ENCODE measurements at regions of chr6 and their contacts with region 1.

Region 1: DNA sequence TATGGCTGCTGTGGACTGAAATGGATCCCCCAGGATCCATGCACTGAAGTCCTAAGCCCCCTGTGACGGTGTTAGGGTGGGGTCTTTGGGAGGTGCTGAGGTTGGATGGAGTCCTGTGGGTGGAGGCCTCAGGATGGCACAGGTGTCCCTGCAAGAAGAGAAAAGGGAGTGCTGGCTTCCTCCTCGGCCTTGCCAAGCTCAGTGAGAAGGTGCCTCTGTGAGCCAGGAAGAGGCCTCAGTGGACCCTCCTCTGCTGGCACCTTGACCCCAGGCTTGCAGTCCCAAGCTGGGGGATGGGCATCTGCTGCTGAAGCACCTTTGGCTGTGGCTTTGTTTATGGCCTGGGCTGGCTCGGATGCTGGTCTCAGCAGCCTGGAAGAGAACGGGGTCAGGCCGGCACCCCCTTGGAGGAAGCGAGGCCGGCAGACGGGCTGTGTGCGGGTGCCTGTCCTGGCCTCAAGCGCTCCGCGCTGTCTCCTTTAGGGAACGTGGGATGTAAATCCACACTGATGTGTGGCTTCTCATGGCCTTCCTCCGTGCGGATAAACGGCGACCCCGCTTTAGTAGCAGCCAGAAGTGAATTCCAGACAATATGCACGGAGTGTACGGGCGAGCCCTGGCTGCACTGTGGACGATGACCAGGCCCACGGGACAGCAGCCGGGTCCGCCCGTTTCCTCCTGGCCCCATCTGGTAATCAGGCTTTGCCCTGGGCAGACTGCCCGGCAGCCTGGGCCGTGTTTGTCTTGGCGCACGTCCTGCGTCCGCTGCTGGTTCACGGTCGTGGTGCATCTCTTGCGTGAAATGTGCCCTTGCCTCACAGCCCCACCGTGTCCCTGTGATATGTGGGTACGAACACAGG is 182.6 kb downstream of the ERMARD start:
- DNase-seq: peak; percentile 96
- H3K4me3 ChIP-seq: no peak overlapping the region
- H3K27ac ChIP-seq: peak overlapping the region; percentile 88
- H3K4me1 ChIP-seq: peaks cover 25% of the 10 kb centered on the region
- H3K27me3 ChIP-seq: no peaks in the 10 kb centered on the region
- CTCF ChIP-seq: no peak
- POLR2A ChIP-seq: peak; percentile 52

Region 2: DNA sequence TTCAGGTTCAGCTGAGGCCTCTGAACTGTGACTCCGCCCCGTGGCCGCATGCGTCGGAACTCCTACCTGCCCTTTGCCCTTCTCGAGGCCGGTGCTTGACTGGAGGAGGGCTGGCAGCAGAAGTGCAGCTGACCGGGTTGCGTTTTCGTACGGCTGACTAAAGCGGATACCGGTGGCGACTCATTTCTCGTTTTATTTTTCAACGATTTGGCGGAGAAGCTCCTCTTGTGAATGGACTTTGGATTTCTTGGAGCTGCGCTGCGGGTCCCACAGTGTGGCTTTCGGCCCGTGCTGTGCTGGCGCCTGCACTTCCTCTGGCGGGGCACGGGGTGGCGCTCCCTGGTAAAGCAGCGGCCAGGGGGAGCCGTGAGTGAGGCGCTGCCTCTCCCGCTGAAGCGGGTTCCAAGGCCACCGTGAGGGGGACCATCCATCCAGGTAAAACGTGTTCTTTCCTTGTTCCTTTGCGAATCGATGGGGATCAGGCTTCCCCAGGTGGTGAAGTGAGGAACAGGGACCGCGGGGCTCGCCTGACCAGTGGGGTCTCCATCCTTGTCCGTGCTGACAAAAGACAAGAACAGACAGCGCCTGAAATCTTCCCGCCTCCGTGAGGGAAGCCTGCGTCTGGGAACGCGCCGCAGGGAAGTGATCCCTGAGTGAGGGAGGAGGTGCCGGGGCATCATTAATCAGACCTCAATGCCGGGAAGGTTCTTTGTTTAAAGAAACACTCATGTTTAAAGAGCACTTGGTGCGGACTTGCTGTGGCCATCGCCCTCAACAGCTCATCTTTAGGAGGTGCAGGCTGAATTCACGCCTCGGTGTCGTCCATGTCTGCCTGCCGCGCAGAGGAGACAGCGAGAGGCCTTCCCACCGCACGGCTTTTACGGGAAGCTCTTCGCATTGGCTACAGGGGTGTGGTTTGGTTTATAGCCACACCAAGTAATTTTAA is 143.8 kb before region 1 on chr6:
- CTCF ChIA-PET with region 1: interaction called, 4 read pairs
- POLR2A ChIA-PET with region 1: no interaction called
- dilution Hi-C with region 1: no loop called
- intact Hi-C with region 1: loop called (anchors 1 kb)
- DNase-seq: peak; percentile 75
- H3K4me3 ChIP-seq: peak overlapping the region; percentile 14 to 33 (median 24)
- H3K27ac ChIP-seq: no peak overlapping the region
- H3K4me1 ChIP-seq: peaks cover 6% of the 10 kb centered on the region
- H3K27me3 ChIP-seq: peaks cover 0 to 4% of the 10 kb centered on the region in 2 experiments
- CTCF ChIP-seq: peak; percentile 97 to 99
- POLR2A ChIP-seq: no peak

Region 3: DNA sequence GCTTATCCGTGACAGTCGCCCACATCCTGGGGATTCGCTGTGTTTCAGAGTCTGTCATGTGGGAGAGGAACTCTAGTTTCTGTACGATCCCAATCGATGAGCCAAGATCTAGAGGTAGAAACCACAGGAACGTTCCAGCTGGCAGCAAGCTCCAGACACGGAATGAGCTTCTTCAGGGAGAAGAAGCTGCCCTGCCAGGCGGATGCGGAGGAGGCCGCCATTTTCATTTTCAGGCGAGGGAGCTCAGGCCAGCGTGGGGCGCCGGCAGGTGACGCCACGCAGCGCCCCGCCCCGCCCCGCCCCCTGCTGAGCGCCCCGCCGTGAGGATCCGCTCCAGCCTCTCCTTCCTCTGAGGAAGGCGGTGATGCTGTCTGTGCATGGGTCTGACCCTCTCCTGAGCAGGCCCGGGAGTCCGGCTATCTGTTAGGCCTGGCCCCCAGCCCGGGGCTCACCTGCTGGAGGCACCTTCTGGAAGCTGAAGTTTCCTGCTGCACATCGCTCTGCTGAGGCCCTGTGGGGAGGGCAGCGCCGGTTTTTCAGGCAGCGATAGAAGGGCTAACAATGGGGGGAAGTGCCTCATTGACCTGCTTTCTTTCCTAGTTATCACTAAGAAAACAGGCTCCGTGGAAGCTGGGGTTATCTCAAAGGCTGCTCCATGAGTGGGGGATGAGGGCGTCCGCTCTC is 35.1 kb before region 1 on chr6:
- CTCF ChIA-PET with region 1: interaction called, 11 read pairs
- POLR2A ChIA-PET with region 1: interaction called, 5 read pairs
- dilution Hi-C with region 1: no loop called
- intact Hi-C with region 1: loop called (anchors 1 kb)
- DNase-seq: peak; percentile 92
- H3K4me3 ChIP-seq: no peak overlapping the region
- H3K27ac ChIP-seq: peak overlapping the region; percentile 2
- H3K4me1 ChIP-seq: peaks cover 13% of the 10 kb centered on the region
- H3K27me3 ChIP-seq: no peaks in the 10 kb centered on the region
- CTCF ChIP-seq: no peak
- POLR2A ChIP-seq: no peak

Region 4: GRCh38 chr6:169915769-169916550 is 18.1 kb before region 1 on chr6:
- CTCF ChIA-PET with region 1: interaction called, 4 read pairs
- POLR2A ChIA-PET with region 1: no interaction called
- dilution Hi-C with region 1: no loop called
- intact Hi-C with region 1: loop called (anchors 1 kb)
- DNase-seq: peak; percentile 98
- H3K4me3 ChIP-seq: no peak overlapping the region
- H3K27ac ChIP-seq: no peak overlapping the region
- H3K4me1 ChIP-seq: peaks cover 12% of the 10 kb centered on the region
- H3K27me3 ChIP-seq: peaks cover 2 to 4% of the 10 kb centered on the region in 2 experiments
- CTCF ChIP-seq: no peak
- POLR2A ChIP-seq: no peak

Region 5: GRCh38 chr6:170152989-170153388 is 218.9 kb after region 1 on chr6:
- CTCF ChIA-PET with region 1: no interaction called
- POLR2A ChIA-PET with region 1: no interaction called
- dilution Hi-C with region 1: no loop called
- intact Hi-C with region 1: loop called (anchors 1 kb)
- DNase-seq: no peak
- H3K4me3 ChIP-seq: no peak overlapping the region
- H3K27ac ChIP-seq: no peak overlapping the region
- H3K4me1 ChIP-seq: peaks cover 7% of the 10 kb centered on the region
- H3K27me3 ChIP-seq: no peaks in the 10 kb centered on the region
- CTCF ChIP-seq: no peak
- POLR2A ChIP-seq: no peak

Region 6: DNA sequence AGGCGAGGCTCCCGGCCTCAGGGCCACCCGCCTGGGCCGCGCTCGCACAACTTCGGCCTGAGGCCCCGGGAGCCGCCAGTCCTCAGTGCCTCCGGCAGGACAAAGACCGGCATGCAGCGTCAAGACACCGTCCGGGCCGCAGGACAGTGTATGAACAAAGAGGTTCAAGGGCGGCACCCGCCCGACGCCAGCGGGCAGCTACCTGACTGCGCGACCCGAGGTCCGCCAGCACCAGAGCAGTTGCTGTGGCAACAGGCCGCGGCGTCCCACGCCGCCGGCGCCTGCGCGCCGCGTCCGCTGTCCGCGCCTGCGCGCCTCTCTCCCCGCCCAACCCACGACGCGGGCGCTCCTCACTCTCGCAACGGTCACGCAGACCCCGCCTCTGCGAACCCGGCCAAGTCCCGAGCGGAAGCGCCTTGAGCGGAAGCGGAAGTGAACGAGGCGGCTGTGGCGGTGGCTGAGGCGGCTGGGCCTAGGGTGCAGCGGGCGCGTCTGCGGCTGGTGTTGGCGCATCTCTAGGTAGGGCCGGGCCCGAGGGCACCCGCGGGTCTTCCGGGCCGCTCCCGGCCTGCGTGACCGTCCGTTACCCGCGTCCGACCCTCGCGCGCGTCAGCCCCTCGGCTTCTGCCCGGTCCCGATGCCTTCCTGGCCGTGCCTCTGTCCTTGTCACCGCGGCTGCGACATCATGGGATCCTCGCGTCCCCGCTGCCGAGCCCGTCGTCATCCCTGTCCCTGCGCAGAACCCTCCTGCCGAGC is 372.4 kb after region 1 on chr6 and contains the start of gene FAM120B:
- CTCF ChIA-PET with region 1: no interaction called
- POLR2A ChIA-PET with region 1: no interaction called
- dilution Hi-C with region 1: no loop called
- intact Hi-C with region 1: loop called (anchors 2 kb)
- DNase-seq: peak; percentile 96
- H3K4me3 ChIP-seq: peak within 1 kb of the TSS; percentile 48 to 86 (median 78)
- H3K27ac ChIP-seq: peak within 1 kb of the TSS; percentile 73
- H3K4me1 ChIP-seq: peaks cover 11% of the 10 kb centered on the region
- H3K27me3 ChIP-seq: no peaks in the 10 kb centered on the region
- CTCF ChIP-seq: no peak
- POLR2A ChIP-seq: peak; percentile 97
- total RNA-seq, gene FAM120B: 28.1 and 28.2 TPM in 2 replicates